RWPE1 (cell line): ENCODE measurements at regions of chr12 and their contacts with region 1.

Region 1: GRCh38 chr12:13211859-13212664 is 15.5 kb downstream of the EMP1 start:
- DNase-seq: no peak
- H3K27ac ChIP-seq: peak overlapping the region; percentile 55; the same call in 1 of the 2 replicates
- CTCF ChIP-seq: peak; percentile 57

Region 2: DNA sequence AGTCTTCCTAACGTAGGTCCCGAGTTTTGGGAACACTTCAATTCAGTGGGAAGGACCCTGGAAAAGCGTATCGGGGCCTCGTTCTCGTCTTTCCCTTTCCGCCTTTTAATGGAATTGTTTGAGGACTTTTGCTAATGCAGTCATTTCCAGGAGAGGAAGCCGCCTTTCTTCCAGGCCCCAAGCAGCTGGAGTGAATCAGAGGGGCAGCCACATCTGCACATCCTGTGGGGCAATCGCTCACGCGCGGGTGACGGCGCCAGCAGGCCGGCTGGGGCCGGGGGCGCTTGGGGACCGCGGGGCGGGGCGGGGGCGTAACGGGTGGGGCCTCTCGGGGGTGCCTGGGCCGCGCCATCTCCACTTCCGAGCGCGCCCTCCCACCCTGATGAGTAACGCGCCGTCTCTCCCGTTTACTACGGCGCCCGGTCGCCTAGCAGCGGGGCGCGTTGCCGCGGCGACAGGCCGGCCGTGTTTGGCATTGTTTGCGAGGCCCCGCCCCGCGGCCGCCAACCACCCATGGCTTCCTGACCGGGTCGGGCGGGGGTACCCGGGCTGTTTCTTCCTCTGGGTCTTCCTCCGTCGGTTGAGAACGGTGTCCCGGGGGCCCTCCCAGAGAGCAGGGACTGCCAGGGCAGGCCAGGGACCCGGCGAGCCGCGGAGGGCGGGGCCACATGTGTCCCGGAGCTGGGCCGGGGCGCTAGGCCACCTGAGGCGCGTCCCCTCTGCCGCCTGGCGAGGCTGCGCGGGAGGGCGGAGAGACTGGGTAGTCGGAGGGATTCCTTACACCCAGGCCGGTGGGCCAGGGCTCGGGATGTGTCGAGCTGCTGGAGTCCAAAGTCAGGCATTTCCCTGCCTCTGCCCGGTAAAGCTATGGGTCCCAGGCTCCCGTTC is 110.9 kb before region 1 on chr12:
- CTCF ChIA-PET with region 1: interaction called, 16 read pairs
- POLR2A ChIA-PET with region 1: no interaction called
- DNase-seq: peak; percentile 82
- H3K27ac ChIP-seq: peak overlapping the region; percentile 98
- CTCF ChIP-seq: no peak

Region 3: DNA sequence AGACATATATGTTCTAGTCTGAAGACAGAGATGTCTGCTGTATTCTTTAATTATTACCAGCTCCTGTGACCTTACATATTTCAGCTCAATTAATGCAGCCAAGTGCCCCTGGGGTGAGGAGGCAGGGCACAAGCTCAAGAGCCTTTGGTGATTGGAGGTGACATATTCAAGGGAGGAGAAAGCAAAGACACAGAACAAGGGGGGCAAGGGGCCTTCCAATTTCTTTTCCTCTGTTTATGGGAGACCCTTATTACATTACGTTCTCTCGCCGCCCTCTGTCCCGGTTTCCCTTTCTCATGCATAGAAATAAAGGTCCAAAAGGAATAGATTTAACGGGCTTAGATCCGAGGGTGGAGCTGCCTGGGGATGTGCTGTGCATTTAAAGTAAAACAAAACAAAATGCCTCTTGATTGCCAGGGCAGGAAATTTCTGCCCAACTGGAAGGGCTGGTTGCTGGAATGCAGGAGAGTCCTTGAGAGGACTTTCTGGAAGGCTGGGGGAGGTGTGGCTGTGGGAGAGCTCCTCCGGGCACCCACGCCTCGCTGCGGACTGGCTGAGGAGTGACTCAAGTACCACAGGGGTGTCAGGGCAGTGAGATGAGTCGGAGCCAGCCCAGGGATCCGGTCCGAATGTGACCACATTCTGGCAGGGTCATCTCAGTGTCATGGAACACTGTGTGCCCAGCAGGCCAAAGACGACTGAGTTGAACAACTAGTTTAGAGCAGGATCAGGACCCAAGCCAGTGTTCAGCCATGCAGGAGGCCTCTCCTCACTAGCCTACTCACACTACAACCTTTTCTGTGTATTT is 76.5 kb before region 1 on chr12:
- CTCF ChIA-PET with region 1: interaction called, 23 read pairs
- POLR2A ChIA-PET with region 1: no interaction called
- DNase-seq: peak; percentile 96
- H3K27ac ChIP-seq: peak overlapping the region; percentile 72
- CTCF ChIP-seq: no peak

Region 4: DNA sequence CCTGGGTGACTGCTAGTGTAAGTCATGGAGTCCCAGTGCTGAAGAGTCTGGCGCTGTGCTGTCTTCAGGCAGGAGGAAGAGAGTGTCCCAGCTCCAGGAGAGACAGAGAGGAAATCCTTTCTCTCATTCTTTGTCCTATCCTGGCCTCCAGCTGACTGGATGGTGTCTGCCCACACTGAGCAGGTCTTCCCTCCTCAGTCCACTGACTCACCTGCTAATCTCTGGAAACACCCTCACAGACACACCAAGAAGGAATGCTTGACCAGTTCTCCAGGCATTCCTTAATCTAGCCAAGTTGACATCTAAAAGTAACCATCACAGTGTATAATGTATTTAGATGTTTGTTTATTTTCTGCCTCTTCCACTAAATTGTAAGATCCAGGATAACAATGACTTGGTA is 38.4 kb after region 1 on chr12:
- CTCF ChIA-PET with region 1: no interaction called
- POLR2A ChIA-PET with region 1: no interaction called
- DNase-seq: peak; percentile 58
- H3K27ac ChIP-seq: no peak overlapping the region
- CTCF ChIP-seq: no peak